ENCODE measurements at regions of chr15 and their contacts with region 1.

Region 1: DNA sequence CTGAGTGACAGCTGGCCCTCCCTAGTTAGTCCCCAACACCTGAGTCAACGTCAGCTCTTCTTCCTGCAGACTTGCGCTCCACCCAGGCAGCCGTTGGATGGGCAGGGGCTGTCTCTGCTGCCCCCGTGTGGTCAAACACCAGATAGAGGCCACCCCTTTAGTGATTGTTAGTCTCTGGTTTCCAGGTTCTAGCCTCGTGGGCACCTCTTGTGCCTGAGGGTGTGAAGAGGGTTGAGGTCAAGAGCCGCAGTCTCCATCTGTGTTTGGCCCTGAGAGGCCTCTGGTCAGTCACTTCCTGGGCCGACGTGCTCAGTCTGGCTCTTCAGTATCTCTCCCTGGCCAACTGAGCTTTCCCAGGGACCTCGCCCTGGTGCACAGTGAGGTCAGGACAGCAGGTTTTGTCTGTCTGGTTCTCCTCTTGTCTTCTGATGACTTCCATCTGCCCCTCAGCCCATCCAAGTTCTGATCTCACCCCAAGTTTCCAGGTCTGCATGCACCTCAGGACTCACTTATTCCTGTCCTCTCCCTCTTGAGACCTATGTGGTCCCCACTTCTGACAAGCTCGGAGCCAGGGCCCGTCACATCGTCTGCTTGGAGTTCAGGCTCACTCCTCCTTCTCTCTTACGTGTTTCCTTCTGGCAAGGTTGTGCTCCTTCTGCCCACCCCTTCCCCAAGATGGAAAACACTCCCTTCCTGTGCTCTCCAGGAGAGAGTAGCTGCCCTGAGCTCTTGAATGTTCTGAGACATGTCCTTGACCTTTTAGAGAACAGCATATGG is 20.9 kb downstream of the CD276 start:
- DNase-seq: peak; percentile 76

Region 2: GRCh38 chr15:73677146-73677607 is 27.9 kb before region 1 on chr15:
- CTCF ChIA-PET with region 1: interaction called, 18 read pairs
- POLR2A ChIA-PET with region 1: no interaction called
- DNase-seq: peak; percentile 72

Region 3: DNA sequence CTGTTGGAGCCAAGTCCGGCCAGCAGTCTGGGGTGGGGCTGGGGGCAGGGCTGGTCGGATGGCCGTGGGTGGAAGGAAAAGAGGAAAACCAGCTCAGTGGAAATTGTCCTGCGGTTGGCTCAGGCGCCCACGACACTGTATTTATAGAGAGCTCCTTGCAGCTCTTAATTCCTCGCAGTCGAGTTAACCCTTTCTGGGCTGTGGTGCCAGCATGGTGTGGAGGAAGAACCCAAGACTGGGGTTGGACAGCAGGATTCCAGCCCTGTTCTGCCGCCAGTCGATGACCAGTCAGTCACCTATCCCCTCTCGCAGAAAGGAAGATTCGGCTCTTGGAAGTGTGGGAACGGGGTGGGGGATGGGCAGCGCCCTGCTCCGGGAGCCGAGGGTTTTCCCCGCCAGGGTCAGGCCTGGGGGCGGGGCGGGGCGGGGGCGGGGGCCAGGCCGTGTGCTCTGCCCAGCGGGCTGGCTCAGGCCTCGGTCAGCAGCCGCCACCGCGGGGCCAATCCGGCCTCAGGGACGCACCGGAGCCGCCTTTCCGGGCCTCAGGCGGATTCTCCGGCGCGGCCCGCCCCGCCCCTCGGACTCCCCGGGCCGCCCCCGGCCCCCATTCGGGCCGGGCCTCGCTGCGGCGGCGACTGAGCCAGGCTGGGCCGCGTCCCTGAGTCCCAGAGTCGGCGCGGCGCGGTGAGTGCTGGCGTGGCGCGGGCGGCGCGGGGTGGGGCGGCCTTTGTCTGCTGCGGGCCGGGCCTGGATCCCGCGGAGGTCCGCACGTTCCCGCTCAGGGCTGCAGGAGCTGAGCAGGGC is 21.1 kb before region 1 on chr15 and contains the start of gene CD276:
- CTCF ChIA-PET with region 1: interaction called, 16 read pairs
- POLR2A ChIA-PET with region 1: interaction called, 3 read pairs
- DNase-seq: peak; percentile 62

Region 4: DNA sequence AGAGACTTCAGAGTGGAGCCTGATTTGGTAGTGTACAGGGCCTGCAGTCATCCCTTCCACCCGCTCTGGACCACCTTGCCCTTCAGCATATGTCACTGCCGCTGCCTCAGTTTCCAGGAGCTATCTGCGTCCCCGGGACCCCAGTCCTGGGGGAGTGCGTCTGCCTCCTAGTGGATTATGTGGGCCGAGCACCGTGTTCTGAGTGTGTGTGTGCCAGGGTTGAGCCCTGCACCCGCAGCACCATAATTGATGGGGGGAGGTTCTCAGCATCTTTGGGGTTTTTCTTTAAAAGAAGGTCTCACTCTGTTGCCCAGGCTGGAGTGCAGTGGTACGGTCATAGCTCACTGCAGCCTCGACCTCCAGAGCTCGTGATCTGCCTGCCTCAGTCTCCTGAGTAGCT is 12.7 kb after region 1 on chr15:
- CTCF ChIA-PET with region 1: interaction called, 21 read pairs
- POLR2A ChIA-PET with region 1: no interaction called
- DNase-seq: peak; percentile 30

Measured in HEK293T (cell line).